ENCODE measurements at regions of chr1 and their contacts with region 1.

Region 1: GRCh38 chr1:173867753-173868265 is at the start of gene GAS5:
- DNase-seq: peak; percentile 96 to 100
- H3K4me3 ChIP-seq: peak within 1 kb of the TSS; percentile 90 to 100 (median 92)
- H3K27ac ChIP-seq: peak within 1 kb of the TSS; percentile 93
- H3K4me1 ChIP-seq: peaks cover 2 to 10% (median 4%) of the 10 kb centered on the region in 4 experiments; a peak in 5 of 7 replicates
- H3K27me3 ChIP-seq: no peaks in the 10 kb centered on the region
- CTCF ChIP-seq: no peak
- EP300 ChIP-seq: no peak
- POLR2A ChIP-seq: peak; percentile 99 to 100
- RAD21 ChIP-seq: no peak
- total RNA-seq, gene GAS5: 763 and 799 TPM in 2 replicates

Region 2: DNA sequence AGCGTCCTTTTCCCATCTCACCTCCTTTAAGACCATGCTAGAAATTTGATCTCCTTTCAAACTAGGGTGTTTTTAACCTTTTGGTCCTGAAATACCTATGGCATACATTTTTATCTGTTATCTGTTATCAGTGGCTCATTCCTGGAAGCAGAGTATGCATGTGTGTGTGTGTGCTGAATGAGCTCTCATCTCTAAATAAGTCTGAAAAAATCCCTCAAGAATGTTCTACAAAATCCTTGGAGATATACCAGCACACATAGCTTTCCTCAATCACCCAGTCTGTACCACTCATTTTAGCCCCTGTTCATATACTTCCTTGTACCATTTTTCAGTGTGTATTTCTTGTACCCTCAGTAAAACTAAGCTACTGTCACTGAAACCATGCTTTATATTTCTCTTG is 49.4 kb before region 1 on chr1:
- CTCF ChIA-PET with region 1: no interaction called
- POLR2A ChIA-PET with region 1: interaction called, 166 read pairs
- DNase-seq: no peak
- H3K4me3 ChIP-seq: no peak overlapping the region
- H3K27ac ChIP-seq: no peak overlapping the region
- H3K4me1 ChIP-seq: no peaks in the 10 kb centered on the region; a peak in 3 of 7 replicates
- H3K27me3 ChIP-seq: no peaks in the 10 kb centered on the region
- CTCF ChIP-seq: no peak
- EP300 ChIP-seq: no peak
- POLR2A ChIP-seq: no peak
- RAD21 ChIP-seq: no peak

Region 3: GRCh38 chr1:173886746-173887611 is 19.2 kb after region 1 on chr1:
- CTCF ChIA-PET with region 1: no interaction called
- POLR2A ChIA-PET with region 1: interaction called, 109 read pairs
- DNase-seq: no peak
- H3K4me3 ChIP-seq: no peak overlapping the region
- H3K27ac ChIP-seq: no peak overlapping the region
- H3K4me1 ChIP-seq: peaks cover 0 to 7% (median 2%) of the 10 kb centered on the region in 4 experiments; a peak in 2 of 7 replicates
- H3K27me3 ChIP-seq: no peaks in the 10 kb centered on the region
- CTCF ChIP-seq: no peak
- EP300 ChIP-seq: no peak
- POLR2A ChIP-seq: no peak
- RAD21 ChIP-seq: no peak

Region 4: DNA sequence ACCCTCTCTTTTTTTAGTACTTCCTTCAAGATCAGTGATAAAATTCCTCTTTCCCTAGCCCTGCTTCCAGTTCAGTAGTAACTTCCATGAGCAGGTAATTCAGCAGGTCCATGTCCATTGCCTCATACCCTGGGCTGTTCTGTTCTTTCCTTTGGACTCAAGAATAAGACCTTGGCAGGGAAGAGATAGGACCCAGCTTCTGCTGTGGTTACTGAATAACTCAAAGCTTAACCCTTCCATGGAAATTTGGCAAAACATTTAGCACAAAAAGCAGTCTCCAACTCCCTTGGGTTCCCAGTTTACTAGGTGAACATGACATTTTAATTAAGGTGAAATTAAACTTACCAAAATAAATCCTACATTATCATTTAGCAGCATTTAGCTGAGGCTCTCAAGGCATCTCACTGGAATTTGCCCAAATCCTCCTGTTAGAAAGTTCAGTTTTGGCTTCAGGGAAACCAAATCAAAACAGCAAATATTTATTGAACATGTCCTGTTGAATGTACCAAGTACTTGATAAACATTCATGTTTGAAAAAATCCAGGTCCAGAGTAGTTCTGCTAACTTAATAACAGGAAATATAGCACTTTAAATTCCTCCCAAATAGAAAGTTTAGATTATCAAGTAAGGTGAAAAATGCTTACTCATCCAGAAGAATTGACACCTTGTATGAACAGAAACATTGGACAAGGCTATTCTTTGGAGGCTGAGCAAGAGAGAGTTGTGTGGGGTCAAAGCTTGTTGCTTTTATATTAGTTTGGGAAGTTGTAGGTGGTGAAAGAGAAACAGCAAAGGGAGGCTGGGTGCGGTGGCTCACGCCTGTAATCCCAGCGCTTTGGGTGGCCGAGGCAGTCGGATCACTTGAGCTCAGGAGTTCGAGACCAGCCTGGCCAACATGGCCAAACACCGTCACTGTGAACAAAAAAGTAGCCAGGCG is 57.8 kb after region 1 on chr1:
- CTCF ChIA-PET with region 1: interaction called, 3 read pairs
- POLR2A ChIA-PET with region 1: interaction called, 14 read pairs
- DNase-seq: no peak
- H3K4me3 ChIP-seq: no peak overlapping the region
- H3K27ac ChIP-seq: no peak overlapping the region
- H3K4me1 ChIP-seq: no peaks in the 10 kb centered on the region
- H3K27me3 ChIP-seq: no peaks in the 10 kb centered on the region
- CTCF ChIP-seq: no peak
- EP300 ChIP-seq: no peak
- POLR2A ChIP-seq: no peak
- RAD21 ChIP-seq: no peak

Region 5: DNA sequence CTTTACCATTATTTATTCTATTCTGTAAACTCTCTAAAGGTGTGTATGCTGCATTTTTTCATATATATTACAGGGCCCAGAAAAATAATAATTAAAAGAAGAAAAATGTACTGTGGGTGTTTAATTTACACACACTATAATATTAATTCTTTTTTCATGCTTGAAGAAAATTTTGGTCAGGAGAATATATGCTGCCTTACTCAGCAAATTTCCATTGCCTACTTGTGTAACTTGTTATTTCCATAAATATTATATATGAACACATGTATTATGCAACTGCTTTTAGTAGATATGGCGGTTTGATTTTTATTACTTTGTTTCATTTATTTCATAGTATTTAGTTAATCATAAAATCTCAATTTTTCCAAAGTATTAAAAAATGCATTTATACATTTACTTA is 95.7 kb after region 1 on chr1:
- CTCF ChIA-PET with region 1: no interaction called
- POLR2A ChIA-PET with region 1: interaction called, 10 read pairs
- DNase-seq: no peak
- H3K4me3 ChIP-seq: no peak overlapping the region
- H3K27ac ChIP-seq: no peak overlapping the region
- H3K4me1 ChIP-seq: no peaks in the 10 kb centered on the region
- H3K27me3 ChIP-seq: no peaks in the 10 kb centered on the region
- CTCF ChIP-seq: no peak
- EP300 ChIP-seq: no peak
- POLR2A ChIP-seq: no peak
- RAD21 ChIP-seq: no peak